HepG2 (cell line): ENCODE measurements at regions of chr6 and their contacts with region 1.

Region 1: GRCh38 chr6:118594877-118595276 is 46.8 kb downstream of the PLN start:
- DNase-seq: no peak
- ATAC-seq: no peak
- H3K4me3 ChIP-seq: no peak overlapping the region
- H3K27ac ChIP-seq: no peak overlapping the region
- H3K4me1 ChIP-seq: no peaks in the 10 kb centered on the region
- H3K27me3 ChIP-seq: no peaks in the 10 kb centered on the region
- CTCF ChIP-seq: no peak
- EP300 ChIP-seq: no peak
- POLR2A ChIP-seq: no peak
- RAD21 ChIP-seq: no peak

Region 2: DNA sequence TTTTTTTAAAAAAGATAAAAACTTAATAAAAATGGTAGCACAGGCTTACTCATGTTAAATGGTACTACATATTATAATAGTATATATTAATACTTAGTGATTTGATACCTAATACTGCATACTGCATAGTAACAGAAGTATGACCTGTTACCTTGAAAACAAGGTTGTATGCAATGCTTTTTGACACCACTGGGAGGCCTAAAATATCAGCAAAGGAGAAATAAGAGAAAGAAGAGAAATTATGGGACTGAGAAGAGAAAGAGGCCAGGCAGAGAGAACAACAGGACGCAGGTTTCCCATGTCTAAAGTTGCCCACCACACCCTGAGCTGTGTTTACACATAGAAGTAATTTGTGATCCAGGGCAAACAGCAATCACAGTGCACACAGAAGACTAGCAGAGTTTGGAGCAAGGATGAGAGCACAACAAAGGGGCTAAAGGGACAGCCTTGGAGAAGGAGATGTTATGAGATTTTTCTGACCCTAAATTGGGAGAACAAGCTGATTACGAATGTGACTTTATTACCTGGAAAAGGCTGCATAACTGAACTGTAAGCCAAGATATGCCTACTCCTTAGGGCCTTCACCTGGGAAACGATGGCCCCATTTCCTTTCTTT is 1242.3 kb before region 1 on chr6:
- CTCF ChIA-PET with region 1: no interaction called
- POLR2A ChIA-PET with region 1: no interaction called
- in situ Hi-C with region 1: no loop called
- intact Hi-C with region 1: no loop called
- DNase-seq: peak; percentile 29
- ATAC-seq: peak; percentile 82
- H3K4me3 ChIP-seq: no peak overlapping the region
- H3K27ac ChIP-seq: no peak overlapping the region
- H3K4me1 ChIP-seq: no peaks in the 10 kb centered on the region
- H3K27me3 ChIP-seq: no peaks in the 10 kb centered on the region
- CTCF ChIP-seq: peak; percentile 53
- EP300 ChIP-seq: no peak
- POLR2A ChIP-seq: no peak
- RAD21 ChIP-seq: no peak

Region 3: DNA sequence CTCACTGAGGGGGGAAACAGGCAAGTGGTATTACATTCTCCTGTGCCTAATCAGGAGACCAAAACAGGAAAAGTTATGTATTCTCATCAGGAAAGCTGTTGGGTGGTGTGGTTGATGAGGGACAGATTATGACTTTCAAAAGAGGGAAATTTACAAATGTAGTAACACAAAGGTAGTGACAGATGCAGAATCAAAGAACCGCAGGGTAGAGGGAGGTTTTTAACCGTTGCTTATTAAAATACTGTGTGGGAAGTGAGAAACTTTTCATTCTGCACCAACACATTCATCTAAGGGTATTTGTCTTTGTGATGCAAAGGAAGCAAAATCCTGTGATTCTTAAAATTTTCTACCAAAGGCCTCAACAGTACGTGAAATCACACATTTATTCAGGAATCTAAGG is 1042.9 kb after region 1 on chr6:
- CTCF ChIA-PET with region 1: no interaction called
- POLR2A ChIA-PET with region 1: no interaction called
- in situ Hi-C with region 1: no loop called
- intact Hi-C with region 1: loop called (anchors 5 kb)
- DNase-seq: no peak
- ATAC-seq: no peak
- H3K4me3 ChIP-seq: no peak overlapping the region
- H3K27ac ChIP-seq: no peak overlapping the region
- H3K4me1 ChIP-seq: no peaks in the 10 kb centered on the region
- H3K27me3 ChIP-seq: no peaks in the 10 kb centered on the region
- CTCF ChIP-seq: no peak
- EP300 ChIP-seq: no peak
- POLR2A ChIP-seq: no peak
- RAD21 ChIP-seq: no peak